ENCODE measurements at regions of chr6 and their contacts with region 1.

Region 1: GRCh38 chr6:27479319-27480182 is 6.6 kb upstream of the ZNF184 start:
- DNase-seq: peak; percentile 96
- ATAC-seq: peak; percentile 78
- H3K4me3 ChIP-seq: peak overlapping the region; percentile 54
- H3K27ac ChIP-seq: peak overlapping the region; percentile 85
- H3K4me1 ChIP-seq: no peaks in the 10 kb centered on the region
- H3K27me3 ChIP-seq: no peaks in the 10 kb centered on the region
- CTCF ChIP-seq: no peak
- POLR2A ChIP-seq: 0 out of 2 replicates have a peak, but pooled peaks have one; percentile 49
- RAD21 ChIP-seq: no peak

Region 2: DNA sequence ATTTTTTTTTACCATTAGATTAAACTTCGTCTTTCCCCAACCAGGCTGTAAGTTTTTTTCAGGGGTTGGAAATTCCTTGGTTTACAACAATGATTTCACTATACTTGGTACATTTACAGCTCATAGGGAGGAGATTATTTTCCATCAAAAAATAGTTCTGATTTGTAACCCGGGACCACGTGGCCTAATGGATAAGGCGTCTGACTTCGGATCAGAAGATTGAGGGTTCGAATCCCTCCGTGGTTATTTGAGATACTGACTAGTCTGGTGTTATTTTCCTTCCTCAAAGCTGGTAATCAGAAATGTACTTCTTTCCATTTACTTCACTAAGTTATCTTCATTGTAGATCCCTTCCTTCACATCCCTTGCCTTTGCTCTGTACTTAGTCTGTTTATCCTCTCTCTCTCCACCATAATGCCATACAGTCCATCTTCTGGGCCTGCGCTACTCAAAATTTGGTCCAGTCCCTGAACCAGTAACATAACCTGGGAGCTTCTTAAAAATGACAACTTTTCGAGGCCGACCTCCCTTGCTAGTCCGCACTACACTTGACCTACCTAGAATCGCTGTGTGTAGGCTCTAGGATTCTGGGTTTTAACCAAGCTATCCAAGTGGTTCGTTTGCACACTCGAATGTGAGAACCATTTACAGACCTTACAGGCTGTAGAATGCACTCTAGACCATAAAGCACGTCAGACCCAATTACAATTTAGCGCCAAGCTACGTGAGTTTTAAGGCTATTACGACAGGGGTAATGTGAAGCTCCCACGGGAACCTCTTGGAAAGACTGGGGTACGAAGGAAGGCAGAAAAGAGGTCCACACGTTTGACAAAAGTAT is 1156.7 kb before region 1 on chr6:
- CTCF ChIA-PET with region 1: no interaction called
- POLR2A ChIA-PET with region 1: no interaction called
- dilution Hi-C with region 1: no loop called
- in situ Hi-C with region 1: loop called (anchors 25 kb)
- intact Hi-C with region 1: no loop called
- DNase-seq: peak; percentile 96
- ATAC-seq: peak; percentile 88
- H3K4me3 ChIP-seq: peak overlapping the region; percentile 61
- H3K27ac ChIP-seq: no peak overlapping the region
- H3K4me1 ChIP-seq: peaks cover 2% of the 10 kb centered on the region; the same call in 1 of the 2 replicates
- H3K27me3 ChIP-seq: no peaks in the 10 kb centered on the region
- CTCF ChIP-seq: no peak
- POLR2A ChIP-seq: no peak
- RAD21 ChIP-seq: no peak

Region 3: DNA sequence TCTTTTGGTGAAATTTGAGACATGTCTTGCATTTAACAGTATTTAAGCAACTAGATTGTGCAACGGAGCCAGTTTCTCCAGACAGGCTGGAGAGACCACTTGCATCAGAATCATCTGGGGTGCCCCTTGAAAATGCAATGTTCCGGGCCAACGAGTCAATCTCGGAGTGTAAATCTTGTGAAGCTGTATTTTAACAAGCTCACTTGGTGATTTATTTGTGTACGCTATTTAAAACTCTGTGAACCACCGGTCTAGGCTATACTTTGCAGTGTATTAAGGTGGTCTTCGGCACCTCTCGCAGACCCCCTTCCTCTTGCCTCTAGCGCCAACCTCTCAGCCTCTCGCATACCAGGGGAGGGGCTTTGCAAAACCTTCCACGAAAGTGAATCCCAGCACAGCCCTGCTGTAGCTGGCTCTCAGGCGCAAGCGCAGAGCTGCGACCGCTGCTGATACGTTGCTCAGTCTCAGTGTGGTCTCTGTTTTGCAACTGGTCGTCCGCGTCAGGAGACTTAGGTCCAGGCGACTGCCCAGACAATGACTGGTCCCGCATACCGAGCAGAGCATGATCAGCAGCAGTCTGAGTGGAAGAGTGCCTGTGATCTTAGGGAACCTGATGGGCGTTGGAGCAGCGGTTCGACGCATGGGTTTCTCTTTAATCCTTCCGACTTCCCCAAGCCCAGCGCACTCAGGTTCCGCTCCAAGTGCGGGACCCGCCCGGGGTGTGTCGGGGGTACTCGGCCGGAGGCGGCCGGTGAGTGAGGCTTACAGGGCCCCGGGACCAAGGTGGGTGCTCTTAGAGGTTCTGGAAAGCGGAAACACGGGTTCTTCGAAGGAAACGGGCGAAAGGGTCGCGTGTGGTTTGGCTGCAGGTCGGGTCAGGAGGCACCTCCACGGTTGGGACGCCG is 91.0 kb before region 1 on chr6 and contains the start of gene ZNF391:
- CTCF ChIA-PET with region 1: no interaction called
- POLR2A ChIA-PET with region 1: no interaction called
- dilution Hi-C with region 1: no loop called
- in situ Hi-C with region 1: no loop called
- intact Hi-C with region 1: loop called (anchors 2 kb)
- DNase-seq: peak; percentile 80
- ATAC-seq: peak; percentile 97
- H3K4me3 ChIP-seq: peak within 1 kb of the TSS; percentile 70
- H3K27ac ChIP-seq: peak within 1 kb of the TSS; percentile 68
- H3K4me1 ChIP-seq: no peaks in the 10 kb centered on the region
- H3K27me3 ChIP-seq: no peaks in the 10 kb centered on the region
- CTCF ChIP-seq: no peak
- POLR2A ChIP-seq: no peak
- RAD21 ChIP-seq: no peak
- total RNA-seq, gene ZNF391: 0.18 and 0.28 TPM in 2 replicates

Region 4: GRCh38 chr6:27518881-27519795 is 39.6 kb after region 1 on chr6:
- CTCF ChIA-PET with region 1: no interaction called
- POLR2A ChIA-PET with region 1: no interaction called
- dilution Hi-C with region 1: no loop called
- in situ Hi-C with region 1: no loop called
- intact Hi-C with region 1: loop called (anchors 1 kb)
- DNase-seq: peak; percentile 90
- ATAC-seq: peak; percentile 87
- H3K4me3 ChIP-seq: peak overlapping the region; percentile 74
- H3K27ac ChIP-seq: peak overlapping the region; percentile 76
- H3K4me1 ChIP-seq: peaks cover 2% of the 10 kb centered on the region; the same call in 1 of the 2 replicates
- H3K27me3 ChIP-seq: peaks cover 2% of the 10 kb centered on the region
- CTCF ChIP-seq: peak; percentile 72
- POLR2A ChIP-seq: no peak
- RAD21 ChIP-seq: peak; percentile 55

Region 5: DNA sequence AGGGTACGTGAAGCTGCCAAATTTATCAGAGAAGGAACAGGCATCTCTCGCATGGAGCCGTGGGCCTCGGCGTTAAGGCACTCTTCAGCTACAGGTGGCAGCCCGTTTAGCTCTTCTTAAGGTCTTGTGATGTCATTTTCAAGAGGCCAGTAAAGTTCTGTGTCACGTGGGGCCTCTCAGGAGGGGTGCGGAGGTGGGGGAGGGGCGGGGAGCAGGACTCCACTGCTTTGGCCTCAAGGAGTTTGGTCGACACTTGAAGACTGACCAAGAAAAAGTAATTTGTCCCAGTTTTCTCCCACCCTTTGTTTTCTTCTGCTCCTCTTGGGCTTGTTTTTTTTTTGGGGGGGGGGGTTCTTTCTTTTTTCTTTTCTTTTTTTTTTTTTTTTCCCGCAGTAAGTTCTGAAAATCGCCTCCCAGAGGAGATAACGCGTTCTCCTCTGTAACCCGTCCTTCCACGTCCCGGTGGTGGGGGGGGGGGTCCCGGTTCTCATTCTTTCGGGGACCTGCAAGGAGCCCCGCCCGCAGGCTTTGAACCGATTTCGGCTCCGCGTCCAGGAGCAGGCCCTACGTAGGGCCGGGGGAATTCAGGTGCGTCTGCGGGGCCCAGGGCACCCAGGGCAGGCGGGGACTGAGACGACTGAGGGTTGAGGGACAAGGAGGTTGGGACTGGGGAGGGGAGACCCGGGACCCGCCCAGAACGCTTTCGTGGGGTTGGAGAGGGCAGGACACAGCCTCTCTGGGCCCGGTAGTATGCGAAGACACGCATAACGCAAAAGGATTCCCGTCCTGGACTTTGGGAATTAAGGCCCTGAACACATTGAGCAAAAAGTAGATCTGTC is 1010.0 kb after region 1 on chr6:
- CTCF ChIA-PET with region 1: no interaction called
- POLR2A ChIA-PET with region 1: no interaction called
- dilution Hi-C with region 1: no loop called
- in situ Hi-C with region 1: no loop called
- intact Hi-C with region 1: loop called (anchors 5 kb)
- DNase-seq: peak; percentile 74
- ATAC-seq: peak; percentile 90
- H3K4me3 ChIP-seq: peak overlapping the region; percentile 58
- H3K27ac ChIP-seq: no peak overlapping the region; the same call in 1 of the 2 replicates
- H3K4me1 ChIP-seq: no peaks in the 10 kb centered on the region
- H3K27me3 ChIP-seq: no peaks in the 10 kb centered on the region; the same call in 1 of the 2 replicates
- CTCF ChIP-seq: no peak
- POLR2A ChIP-seq: no peak
- RAD21 ChIP-seq: no peak